ENCODE measurements at regions of chr1 and their contacts with region 1.

Region 1: GRCh38 chr1:67500413-67500959 is 70.3 kb upstream of the SERBP1 start:
- DNase-seq: peak; percentile 81
- ATAC-seq: peak; percentile 99 to 100
- H3K4me3 ChIP-seq: no peak overlapping the region
- H3K27ac ChIP-seq: no peak overlapping the region; a peak in 1 of 6 replicates
- H3K4me1 ChIP-seq: no peaks in the 10 kb centered on the region
- CTCF ChIP-seq: peak; percentile 85
- EP300 ChIP-seq: no peak
- POLR2A ChIP-seq: no peak
- RAD21 ChIP-seq: peak; percentile 92 to 95

Region 2: DNA sequence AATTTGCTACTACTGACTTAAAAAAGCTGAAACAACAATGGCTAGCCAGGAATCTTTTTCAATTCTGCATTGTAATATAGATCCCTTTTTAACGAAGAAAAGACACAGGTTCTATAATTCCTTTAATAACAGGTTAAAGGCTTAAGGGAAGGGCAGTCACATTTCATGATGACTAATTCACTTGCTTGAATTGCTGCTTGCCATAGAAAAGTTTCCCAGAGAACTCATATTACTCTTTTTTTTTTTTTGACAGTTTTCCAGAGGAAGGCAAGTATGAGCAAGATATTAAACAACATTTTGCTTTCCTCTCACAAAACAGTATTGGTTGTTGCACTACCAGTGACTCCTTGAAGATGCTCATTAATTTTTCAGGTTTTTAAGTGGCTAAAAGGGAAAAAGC is 273.3 kb before region 1 on chr1:
- CTCF ChIA-PET with region 1: interaction called, 18 read pairs
- POLR2A ChIA-PET with region 1: no interaction called
- DNase-seq: no peak
- ATAC-seq: no peak
- H3K4me3 ChIP-seq: no peak overlapping the region
- H3K27ac ChIP-seq: no peak overlapping the region
- H3K4me1 ChIP-seq: no peaks in the 10 kb centered on the region
- CTCF ChIP-seq: no peak
- EP300 ChIP-seq: no peak
- POLR2A ChIP-seq: no peak
- RAD21 ChIP-seq: no peak

Region 3: DNA sequence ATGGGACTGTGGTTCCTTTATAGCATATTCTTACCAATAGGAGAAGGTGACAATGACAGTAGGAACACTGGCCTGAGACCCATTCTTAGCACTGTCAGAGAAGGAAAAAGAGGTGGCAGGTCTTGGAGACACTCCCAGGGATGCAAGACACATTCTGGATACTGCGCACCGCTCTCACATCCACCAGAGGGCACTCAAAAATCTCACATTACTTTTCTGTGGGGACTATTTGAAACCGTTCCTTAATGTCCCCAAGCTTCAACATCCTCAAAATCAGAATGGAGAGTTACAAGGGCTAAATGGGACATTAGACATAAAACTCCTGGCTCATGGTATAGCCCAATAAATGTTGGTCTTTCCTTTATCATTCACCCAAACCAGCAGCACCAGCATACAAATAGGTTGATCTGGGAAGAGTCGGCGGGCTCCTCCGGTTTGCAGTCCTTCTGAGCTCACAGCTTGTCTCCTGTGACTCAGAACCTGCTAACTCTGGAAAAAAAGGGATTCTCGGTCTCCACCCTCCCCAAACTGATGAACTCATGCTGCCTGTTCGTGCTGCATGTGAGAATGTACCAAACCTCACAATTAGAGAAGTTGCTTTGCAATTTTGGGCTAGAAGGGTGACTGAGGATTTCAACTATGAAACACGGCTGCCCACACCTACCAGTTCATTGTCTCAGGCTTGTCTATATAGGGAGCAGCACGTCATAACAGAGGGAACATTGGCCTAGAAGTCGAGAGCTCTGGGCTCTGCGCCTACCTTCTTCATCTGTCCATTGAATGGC is 152.6 kb before region 1 on chr1:
- CTCF ChIA-PET with region 1: interaction called, 36 read pairs
- POLR2A ChIA-PET with region 1: no interaction called
- DNase-seq: peak; percentile 30 to 35
- ATAC-seq: peak; percentile 76 to 90; a peak in 4 of 6 replicates
- H3K4me3 ChIP-seq: no peak overlapping the region
- H3K27ac ChIP-seq: no peak overlapping the region
- H3K4me1 ChIP-seq: no peaks in the 10 kb centered on the region
- CTCF ChIP-seq: peak; percentile 65
- EP300 ChIP-seq: no peak
- POLR2A ChIP-seq: no peak
- RAD21 ChIP-seq: peak; percentile 61 to 63

Region 4: GRCh38 chr1:67489643-67490042 is 10.8 kb before region 1 on chr1:
- CTCF ChIA-PET with region 1: interaction called, 44 read pairs
- POLR2A ChIA-PET with region 1: no interaction called
- DNase-seq: no peak
- ATAC-seq: no peak
- H3K4me3 ChIP-seq: no peak overlapping the region
- H3K27ac ChIP-seq: no peak overlapping the region
- H3K4me1 ChIP-seq: no peaks in the 10 kb centered on the region
- CTCF ChIP-seq: no peak
- EP300 ChIP-seq: no peak
- POLR2A ChIP-seq: no peak
- RAD21 ChIP-seq: no peak

Region 5: DNA sequence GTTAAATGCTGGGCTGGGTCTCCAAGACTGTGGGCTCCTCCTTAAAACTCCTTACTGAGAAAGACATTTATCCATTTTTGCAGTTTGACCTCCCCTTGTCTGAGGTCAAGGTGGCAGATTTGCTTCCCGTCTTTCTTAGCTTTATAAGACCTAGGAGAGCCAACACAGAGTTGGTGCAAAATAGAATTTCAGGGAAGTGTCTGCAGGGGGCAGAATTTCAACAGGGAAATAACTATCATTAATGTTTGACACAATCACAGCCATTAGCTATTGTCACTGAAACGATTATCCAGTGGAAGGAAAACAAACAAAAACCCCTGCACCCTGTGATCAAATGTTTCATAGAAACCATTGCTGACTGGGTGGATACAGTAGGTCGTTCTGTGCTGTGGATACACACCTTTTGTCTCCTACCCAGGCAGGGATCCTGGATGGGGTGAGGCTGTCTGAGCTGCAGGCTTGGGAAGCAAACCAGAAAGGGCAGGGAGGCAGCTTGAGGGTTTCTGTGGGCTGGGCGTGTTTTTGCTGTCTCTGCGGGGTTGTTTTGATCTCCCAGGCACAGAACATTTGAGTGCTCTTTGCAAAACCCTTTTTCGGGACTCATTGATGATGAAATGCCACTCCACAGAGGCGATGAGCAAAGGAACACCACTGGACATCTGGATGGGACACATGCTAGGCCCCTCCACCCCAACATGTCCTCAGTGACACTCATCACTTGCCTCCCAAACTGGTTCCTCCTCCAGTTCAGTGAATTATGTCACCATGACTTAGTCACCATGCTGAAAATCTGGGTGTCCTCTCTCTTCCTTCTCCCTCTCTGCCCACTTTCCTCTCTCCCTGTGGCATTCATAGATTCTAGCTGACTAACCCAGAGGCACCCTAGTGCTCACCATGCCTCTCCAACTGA is 23.9 kb after region 1 on chr1:
- CTCF ChIA-PET with region 1: interaction called, 10 read pairs
- POLR2A ChIA-PET with region 1: no interaction called
- DNase-seq: no peak
- ATAC-seq: peak in 1 of 2 experiments; percentile 33; a peak in 2 of 6 replicates
- H3K4me3 ChIP-seq: no peak overlapping the region
- H3K27ac ChIP-seq: no peak overlapping the region
- H3K4me1 ChIP-seq: no peaks in the 10 kb centered on the region; the same call in 2 of the 3 replicates
- CTCF ChIP-seq: no peak
- EP300 ChIP-seq: no peak
- POLR2A ChIP-seq: no peak
- RAD21 ChIP-seq: no peak

Region 6: DNA sequence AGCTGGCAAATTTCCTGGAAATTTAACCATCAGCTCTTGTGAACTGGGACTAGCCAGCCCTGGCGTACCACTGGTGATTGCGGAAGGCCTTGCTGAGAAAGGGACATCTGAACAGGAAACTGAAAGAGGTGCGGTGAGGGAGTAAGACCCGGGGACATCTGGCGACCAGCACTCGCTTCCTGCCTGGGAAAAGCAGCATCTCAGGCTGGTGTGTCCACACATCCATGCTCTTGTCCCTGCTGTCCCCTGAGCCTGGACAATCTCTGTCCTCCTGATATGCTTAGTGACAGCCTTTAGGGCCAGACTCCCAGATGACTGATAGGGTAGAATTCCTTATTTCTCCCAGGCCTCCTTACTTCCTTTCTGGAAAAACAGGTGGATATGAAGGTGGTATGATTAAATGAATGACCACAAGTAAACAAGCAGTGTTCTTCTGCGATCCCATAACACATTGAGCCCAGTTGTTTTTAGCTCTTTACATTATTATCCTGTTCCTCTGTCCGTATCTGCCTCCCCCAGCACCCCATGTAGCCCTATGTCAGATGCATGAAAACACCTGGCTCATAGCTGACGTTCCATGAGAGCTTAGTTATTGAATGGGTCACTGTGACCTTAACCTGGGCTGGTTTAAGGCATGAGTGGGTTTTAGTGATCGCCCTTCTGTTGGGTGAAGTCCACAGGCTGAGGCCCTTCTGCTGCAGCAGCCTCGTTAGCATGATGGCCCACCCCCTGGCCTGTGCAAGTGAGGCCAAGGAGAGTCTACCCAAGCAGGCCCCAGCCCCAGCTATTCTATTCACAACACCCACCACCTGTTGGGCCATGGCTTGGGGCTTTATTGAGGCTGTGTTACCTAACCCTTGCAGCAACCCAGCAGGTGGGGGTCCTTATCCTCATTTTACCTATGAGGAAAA is 108.4 kb after region 1 on chr1:
- CTCF ChIA-PET with region 1: no interaction called
- POLR2A ChIA-PET with region 1: no interaction called
- DNase-seq: no peak
- ATAC-seq: no peak
- H3K4me3 ChIP-seq: no peak overlapping the region
- H3K27ac ChIP-seq: no peak overlapping the region
- H3K4me1 ChIP-seq: peaks cover under 1% of the 10 kb centered on the region; the same call in 2 of the 3 replicates
- CTCF ChIP-seq: no peak
- EP300 ChIP-seq: no peak
- POLR2A ChIP-seq: no peak
- RAD21 ChIP-seq: no peak